H1 (cell line): ENCODE measurements at regions of chr19 and their contacts with region 1.

Region 1: DNA sequence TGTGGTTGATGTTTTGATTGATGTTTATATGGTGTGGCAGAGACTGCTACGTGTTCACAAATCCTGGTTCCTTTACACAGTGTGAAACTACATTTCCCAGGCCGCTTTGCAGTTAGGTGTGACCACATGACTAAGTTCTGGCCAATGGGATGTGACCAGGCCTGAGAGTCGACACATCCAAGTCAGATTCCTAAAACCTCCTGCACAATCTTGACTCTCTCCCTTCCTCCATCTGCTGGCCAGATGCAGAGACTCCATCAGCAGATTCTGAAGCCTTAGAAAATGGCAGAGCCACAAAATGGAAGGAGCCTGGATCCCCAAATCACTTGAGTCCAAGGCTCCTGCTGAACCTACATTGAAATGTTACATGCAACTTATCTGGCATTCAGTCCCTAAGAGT is 12.6 kb downstream of the CD37 start:
- DNase-seq: no peak
- H3K4me3 ChIP-seq: no peak overlapping the region
- H3K27ac ChIP-seq: no peak overlapping the region
- H3K4me1 ChIP-seq: no peaks in the 10 kb centered on the region
- H3K27me3 ChIP-seq: no peaks in the 10 kb centered on the region
- CTCF ChIP-seq: peak in 2 of 3 experiments; percentile 38 to 49; a peak in 3 of 4 replicates
- EP300 ChIP-seq: no peak
- POLR2A ChIP-seq: no peak
- RAD21 ChIP-seq: peak in 1 of 2 experiments; percentile 38; a peak in 2 of 4 replicates

Region 2: GRCh38 chr19:49287141-49287770 is 60.6 kb before region 1 on chr19:
- CTCF ChIA-PET with region 1: no interaction called
- POLR2A ChIA-PET with region 1: no interaction called
- DNase-seq: no peak
- H3K4me3 ChIP-seq: no peak overlapping the region
- H3K27ac ChIP-seq: no peak overlapping the region
- H3K4me1 ChIP-seq: no peaks in the 10 kb centered on the region
- H3K27me3 ChIP-seq: no peaks in the 10 kb centered on the region
- CTCF ChIP-seq: no peak
- EP300 ChIP-seq: no peak
- POLR2A ChIP-seq: no peak
- RAD21 ChIP-seq: no peak

Region 3: GRCh38 chr19:49363268-49364082 is 15.6 kb after region 1 on chr19 and contains the start of gene DKKL1:
- CTCF ChIA-PET with region 1: interaction called, 4 read pairs
- POLR2A ChIA-PET with region 1: interaction called, 112 read pairs
- DNase-seq: peak; percentile 100
- H3K4me3 ChIP-seq: peak within 1 kb of the TSS; percentile 92 to 95 (median 93)
- H3K27ac ChIP-seq: 0 out of 2 replicates have a peak within 1 kb of the TSS, but pooled peaks have one; percentile 31
- H3K4me1 ChIP-seq: peaks cover 0 to 16% (median 9%) of the 10 kb centered on the region in 4 experiments; a peak in 5 of 7 replicates
- H3K27me3 ChIP-seq: no peaks in the 10 kb centered on the region
- CTCF ChIP-seq: peak in 2 of 3 experiments; percentile 14 to 55; a peak in 2 of 4 replicates
- EP300 ChIP-seq: no peak
- POLR2A ChIP-seq: peak in 1 of 2 experiments; percentile 29; a peak in 1 of 3 replicates
- RAD21 ChIP-seq: peak; percentile 49 to 53; a peak in 3 of 4 replicates
- total RNA-seq, gene DKKL1: 2.6 and 3.1 TPM in 2 replicates